ENCODE measurements at regions of chr1 and their contacts with region 1.

Region 1: DNA sequence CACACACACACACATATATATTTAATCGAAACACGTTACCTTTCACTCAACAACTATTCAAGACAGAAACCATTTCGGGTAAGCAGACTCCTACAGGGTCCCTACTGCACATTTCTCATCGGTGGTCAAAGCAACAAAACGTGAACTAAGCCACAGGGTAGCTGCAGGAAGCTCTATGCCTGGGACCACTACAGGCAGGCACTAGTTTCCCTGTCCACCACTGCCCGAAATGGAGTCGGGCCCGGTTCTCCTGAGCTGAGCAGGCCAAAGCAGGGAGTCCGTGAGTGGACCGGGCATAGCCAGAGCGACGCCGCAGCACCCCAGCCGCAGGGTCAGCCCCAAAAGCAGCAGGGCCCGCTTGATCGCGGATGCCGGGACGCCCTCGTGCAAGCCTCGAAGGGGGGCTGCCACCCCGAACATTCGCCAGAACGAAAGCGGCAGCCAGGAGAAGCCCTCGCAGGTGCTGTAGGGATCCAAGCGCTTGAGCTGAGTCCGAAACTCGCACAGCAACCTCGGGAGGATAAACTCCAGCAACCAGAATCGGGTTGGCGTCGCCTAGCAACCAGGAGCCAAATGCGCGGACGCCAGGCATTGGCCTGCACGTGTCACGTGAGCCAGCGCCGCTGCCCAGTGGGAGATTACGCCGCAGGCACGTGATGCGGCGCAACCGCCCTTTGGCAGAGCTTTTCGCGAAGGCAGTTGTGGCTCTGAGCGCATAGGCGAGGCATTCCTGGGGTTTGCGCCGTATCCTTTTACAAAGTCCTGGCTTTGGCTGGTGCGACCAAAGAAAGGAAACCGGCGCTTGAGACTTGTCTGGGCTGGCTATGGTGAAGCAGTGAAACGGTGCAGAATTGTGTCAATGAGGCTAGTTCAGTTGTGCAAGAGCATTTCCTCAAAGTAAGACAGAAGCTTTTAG is 13.9 kb upstream of the DDI2 start:
- DNase-seq: peak; percentile 99
- H3K4me3 ChIP-seq: peak overlapping the region; percentile 68 to 85 (median 78)
- H3K27ac ChIP-seq: peak overlapping the region; percentile 80 to 87 (median 85)
- H3K4me1 ChIP-seq: peaks cover 5 to 23% (median 19%) of the 10 kb centered on the region in 4 donors
- H3K27me3 ChIP-seq: no peaks in the 10 kb centered on the region
- CTCF ChIP-seq: no peak
- EP300 ChIP-seq: no peak
- POLR2A ChIP-seq: no peak

Region 2: GRCh38 chr1:15328351-15329103 is 274.8 kb before region 1 on chr1:
- intact Hi-C with region 1: no loop called
- DNase-seq: no peak
- H3K4me3 ChIP-seq: no peak overlapping the region
- H3K27ac ChIP-seq: peak overlapping the region in 3 of 4 donors; percentile 1 to 58 (median 48)
- H3K4me1 ChIP-seq: peaks cover 18 to 27% (median 22%) of the 10 kb centered on the region in 4 donors
- H3K27me3 ChIP-seq: no peaks in the 10 kb centered on the region
- CTCF ChIP-seq: no peak
- EP300 ChIP-seq: no peak
- POLR2A ChIP-seq: no peak

Region 3: DNA sequence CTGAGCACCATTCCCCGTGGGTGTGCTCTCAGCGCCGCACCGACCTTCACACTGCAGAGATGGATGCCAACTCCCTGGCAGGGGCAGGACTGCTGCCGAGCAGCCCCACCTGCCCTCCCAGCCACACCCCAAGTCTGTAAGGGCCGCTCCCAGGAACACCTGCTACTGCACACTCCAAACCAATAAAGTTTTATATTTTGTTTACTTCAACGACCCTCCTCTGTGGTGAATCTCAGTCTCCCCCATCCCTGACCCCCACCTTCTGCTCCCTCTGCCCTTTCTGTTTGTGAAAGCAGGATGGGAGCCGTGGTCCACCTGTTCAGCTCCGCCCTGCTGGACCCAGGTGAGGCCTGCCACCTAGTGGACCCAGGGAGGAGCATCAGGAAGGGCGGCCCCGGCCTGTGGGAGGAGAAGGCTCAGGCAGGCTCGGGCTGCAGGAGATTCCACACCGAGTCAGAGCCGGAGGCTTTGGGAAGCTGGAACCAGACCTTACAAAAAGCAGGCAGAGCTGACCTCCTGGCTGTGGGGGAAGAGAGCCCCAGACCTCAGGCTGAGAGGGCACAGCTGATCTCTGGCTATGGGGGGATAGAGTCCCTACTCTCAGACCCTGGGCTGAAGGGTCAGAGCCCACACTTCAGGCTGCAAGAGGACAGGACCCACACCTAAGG is 138.0 kb after region 1 on chr1:
- intact Hi-C with region 1: loop called (anchors 5 kb)
- DNase-seq: no peak
- H3K4me3 ChIP-seq: no peak overlapping the region
- H3K27ac ChIP-seq: no peak overlapping the region
- H3K4me1 ChIP-seq: peaks cover 7 to 20% (median 15%) of the 10 kb centered on the region in 4 donors
- H3K27me3 ChIP-seq: no peaks in the 10 kb centered on the region
- CTCF ChIP-seq: peak; percentile 73 to 88 (median 86)
- EP300 ChIP-seq: no peak
- POLR2A ChIP-seq: no peak

Measured in esophagus muscularis mucosa (tissue), 4 donors.